SK-N-SH (cell line): ENCODE measurements at regions of chr5 and their contacts with region 1.

Region 1: DNA sequence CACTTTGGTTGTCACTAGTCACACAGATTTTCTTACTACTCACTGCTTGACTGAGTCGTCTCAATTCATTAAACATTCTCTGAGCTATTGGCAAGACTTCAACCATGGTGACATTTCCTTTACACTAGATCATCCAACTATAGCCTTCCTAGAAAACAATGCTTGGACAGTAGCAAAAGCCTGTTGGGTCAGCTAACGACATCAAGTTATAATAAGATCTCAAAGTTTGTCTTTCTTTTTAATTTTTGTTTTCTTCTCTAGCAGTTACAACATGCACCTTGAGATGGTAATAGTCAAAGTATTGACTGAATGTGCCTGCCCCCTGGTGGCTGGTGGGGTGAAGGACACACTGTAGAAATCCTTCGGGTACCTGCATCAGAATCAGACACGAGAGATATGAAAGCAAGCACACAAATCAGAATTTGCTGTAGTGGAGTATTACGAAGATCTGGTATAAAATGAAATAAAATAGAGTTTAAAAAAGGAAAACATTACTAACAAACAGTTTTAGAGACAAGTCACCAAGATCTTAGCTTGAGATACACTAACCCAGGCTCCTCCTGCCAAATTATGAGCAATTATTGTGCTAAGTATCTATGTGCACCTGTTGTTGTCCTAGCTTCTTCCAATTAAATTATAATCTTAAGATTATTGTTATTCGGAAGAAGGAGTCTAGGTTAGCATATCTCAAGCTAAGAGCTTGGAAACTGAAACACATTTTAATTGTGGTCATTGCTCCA is 81.2 kb downstream of the ARL15 start:
- DNase-seq: peak; percentile 47
- H3K4me3 ChIP-seq: no peak overlapping the region; a peak in 1 of 4 replicates
- H3K27ac ChIP-seq: no peak overlapping the region
- H3K4me1 ChIP-seq: no peaks in the 10 kb centered on the region; a peak in 1 of 4 replicates
- H3K27me3 ChIP-seq: no peaks in the 10 kb centered on the region
- CTCF ChIP-seq: peak; percentile 98
- EP300 ChIP-seq: no peak
- RAD21 ChIP-seq: peak; percentile 75

Region 2: GRCh38 chr5:53170748-53171349 is 1058.4 kb before region 1 on chr5:
- CTCF ChIA-PET with region 1: interaction called, 12 read pairs
- POLR2A ChIA-PET with region 1: no interaction called
- DNase-seq: peak; percentile 30
- H3K4me3 ChIP-seq: no peak overlapping the region
- H3K27ac ChIP-seq: no peak overlapping the region
- H3K4me1 ChIP-seq: peaks cover 0 to 4% of the 10 kb centered on the region in 2 experiments; a peak in 1 of 4 replicates
- H3K27me3 ChIP-seq: no peaks in the 10 kb centered on the region
- CTCF ChIP-seq: peak; percentile 82
- EP300 ChIP-seq: no peak
- RAD21 ChIP-seq: peak; percentile 80

Region 3: GRCh38 chr5:53262348-53262970 is 966.8 kb before region 1 on chr5:
- CTCF ChIA-PET with region 1: interaction called, 13 read pairs
- POLR2A ChIA-PET with region 1: no interaction called
- DNase-seq: peak; percentile 2
- H3K4me3 ChIP-seq: no peak overlapping the region
- H3K27ac ChIP-seq: no peak overlapping the region
- H3K4me1 ChIP-seq: peaks cover 0 to 4% of the 10 kb centered on the region in 2 experiments; a peak in 1 of 4 replicates
- H3K27me3 ChIP-seq: no peaks in the 10 kb centered on the region
- CTCF ChIP-seq: peak; percentile 75
- EP300 ChIP-seq: no peak
- RAD21 ChIP-seq: peak; percentile 78

Region 4: GRCh38 chr5:53425598-53426511 is 803.4 kb before region 1 on chr5:
- CTCF ChIA-PET with region 1: interaction called, 10 read pairs
- POLR2A ChIA-PET with region 1: no interaction called
- DNase-seq: peak; percentile 36
- H3K4me3 ChIP-seq: no peak overlapping the region
- H3K27ac ChIP-seq: peak overlapping the region in 1 of 2 experiments; percentile 97; a peak in 2 of 4 replicates
- H3K4me1 ChIP-seq: peaks cover 6 to 53% of the 10 kb centered on the region in 2 experiments
- H3K27me3 ChIP-seq: no peaks in the 10 kb centered on the region
- CTCF ChIP-seq: peak; percentile 60
- EP300 ChIP-seq: 0 out of 4 replicates have a peak, but pooled peaks of 1 of the 2 experiments have one; percentile 1
- RAD21 ChIP-seq: peak; percentile 59

Region 5: GRCh38 chr5:53478411-53479044 is 750.7 kb before region 1 on chr5:
- CTCF ChIA-PET with region 1: interaction called, 19 read pairs
- POLR2A ChIA-PET with region 1: no interaction called
- DNase-seq: peak; percentile 56
- H3K4me3 ChIP-seq: peak overlapping the region; percentile 51 to 88
- H3K27ac ChIP-seq: peak overlapping the region in 1 of 2 experiments; percentile 99; a peak in 1 of 4 replicates
- H3K4me1 ChIP-seq: peaks cover 7 to 11% of the 10 kb centered on the region in 2 experiments; a peak in 2 of 4 replicates
- H3K27me3 ChIP-seq: no peaks in the 10 kb centered on the region
- CTCF ChIP-seq: peak; percentile 67
- EP300 ChIP-seq: no peak; a peak in 1 of 4 replicates
- RAD21 ChIP-seq: peak; percentile 73

Region 6: DNA sequence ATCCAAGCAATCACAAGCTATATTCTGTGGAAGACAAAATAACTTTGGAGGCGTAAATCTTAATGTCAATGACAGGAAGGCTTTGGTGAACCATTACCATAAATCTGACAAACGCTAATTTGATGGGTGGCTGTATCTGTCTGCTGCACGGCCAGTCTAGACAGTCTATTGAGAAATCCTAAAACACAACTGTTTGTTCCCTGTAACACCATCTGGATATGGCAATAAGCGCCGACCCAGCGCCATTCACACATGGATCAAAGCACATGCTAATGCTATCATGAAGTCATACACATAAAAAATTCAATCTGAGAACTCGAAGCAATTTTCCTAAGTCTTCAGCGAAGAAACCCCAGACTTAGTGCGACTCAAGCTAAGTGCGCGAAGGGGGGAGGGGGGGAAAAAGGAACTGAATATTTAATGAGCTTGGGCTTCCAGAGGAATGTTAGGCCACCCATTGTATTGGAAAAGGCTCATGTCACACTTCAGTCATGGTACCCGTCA is 13.9 kb before region 1 on chr5:
- CTCF ChIA-PET with region 1: interaction called, 12 read pairs
- POLR2A ChIA-PET with region 1: no interaction called
- DNase-seq: no peak
- H3K4me3 ChIP-seq: no peak overlapping the region
- H3K27ac ChIP-seq: no peak overlapping the region
- H3K4me1 ChIP-seq: no peaks in the 10 kb centered on the region; a peak in 3 of 4 replicates
- H3K27me3 ChIP-seq: no peaks in the 10 kb centered on the region
- CTCF ChIP-seq: no peak
- EP300 ChIP-seq: no peak
- RAD21 ChIP-seq: no peak

Region 7: GRCh38 chr5:54243473-54244080 is 14.4 kb after region 1 on chr5:
- CTCF ChIA-PET with region 1: interaction called, 27 read pairs
- POLR2A ChIA-PET with region 1: no interaction called
- DNase-seq: peak; percentile 49
- H3K4me3 ChIP-seq: no peak overlapping the region
- H3K27ac ChIP-seq: no peak overlapping the region
- H3K4me1 ChIP-seq: no peaks in the 10 kb centered on the region
- H3K27me3 ChIP-seq: no peaks in the 10 kb centered on the region
- CTCF ChIP-seq: peak; percentile 88
- EP300 ChIP-seq: no peak
- RAD21 ChIP-seq: peak; percentile 86